GM12878 (cell line): ENCODE measurements at regions of chr16 and their contacts with region 1.

Region 1: GRCh38 chr16:68289621-68290329 is 21.0 kb downstream of the SLC7A6OS start:
- DNase-seq: peak; percentile 77
- ATAC-seq: peak; percentile 95
- H3K4me3 ChIP-seq: peak overlapping the region; percentile 29; the same call in 1 of the 2 replicates
- H3K27ac ChIP-seq: peak overlapping the region; percentile 92
- H3K4me1 ChIP-seq: peaks cover 57% of the 10 kb centered on the region
- H3K27me3 ChIP-seq: no peaks in the 10 kb centered on the region
- CTCF ChIP-seq: no peak
- EP300 ChIP-seq: 0 out of 4 replicates have a peak, but pooled peaks of 1 of the 2 experiments have one; percentile 11
- POLR2A ChIP-seq: 0 out of 2 replicates have a peak, but pooled peaks have one; percentile 37
- RAD21 ChIP-seq: no peak

Region 2: GRCh38 chr16:68275611-68276191 is 14.1 kb before region 1 on chr16:
- CTCF ChIA-PET with region 1: interaction called, 19 read pairs
- POLR2A ChIA-PET with region 1: interaction called, 177 read pairs
- RAD21 ChIA-PET with region 1: interaction called, 32 read pairs
- SMC1A ChIA-PET with region 1: interaction called, 253 read pairs
- in situ Hi-C with region 1: no loop called
- intact Hi-C with region 1: no loop called
- DNase-seq: peak; percentile 96
- ATAC-seq: peak; percentile 87
- H3K4me3 ChIP-seq: peak overlapping the region; percentile 28; the same call in 1 of the 2 replicates
- H3K27ac ChIP-seq: peak overlapping the region; percentile 70
- H3K4me1 ChIP-seq: peaks cover 37% of the 10 kb centered on the region
- H3K27me3 ChIP-seq: no peaks in the 10 kb centered on the region
- CTCF ChIP-seq: no peak
- EP300 ChIP-seq: peak; percentile 44 to 80; a peak in 3 of 4 replicates
- POLR2A ChIP-seq: no peak
- RAD21 ChIP-seq: no peak

Region 3: GRCh38 chr16:68310761-68311511 is 21.2 kb after region 1 on chr16 and contains the starts of genes PRMT7 and SLC7A6OS:
- CTCF ChIA-PET with region 1: interaction called, 18 read pairs
- POLR2A ChIA-PET with region 1: interaction called, 15 read pairs
- RAD21 ChIA-PET with region 1: interaction called, 16 read pairs
- SMC1A ChIA-PET with region 1: interaction called, 20 read pairs
- in situ Hi-C with region 1: no loop called
- intact Hi-C with region 1: no loop called
- DNase-seq: peak; percentile 65
- ATAC-seq: peak; percentile 99
- H3K4me3 ChIP-seq: peak within 1 kb of the TSS; percentile 95
- H3K27ac ChIP-seq: peak within 1 kb of the TSS; percentile 79
- H3K4me1 ChIP-seq: 0 out of 2 replicates have a peak, but pooled peaks cover 3% of the 10 kb centered on the region
- H3K27me3 ChIP-seq: no peaks in the 10 kb centered on the region
- CTCF ChIP-seq: no peak
- EP300 ChIP-seq: peak in 1 of 2 experiments; percentile 27; a peak in 1 of 4 replicates
- POLR2A ChIP-seq: peak; percentile 98
- RAD21 ChIP-seq: 0 out of 2 replicates have a peak, but pooled peaks have one; percentile 8
- polyA plus RNA-seq, gene PRMT7: 5.1 to 5.6 TPM
- polyA plus RNA-seq, gene SLC7A6OS: 2.9 to 6.4 TPM

Region 4: DNA sequence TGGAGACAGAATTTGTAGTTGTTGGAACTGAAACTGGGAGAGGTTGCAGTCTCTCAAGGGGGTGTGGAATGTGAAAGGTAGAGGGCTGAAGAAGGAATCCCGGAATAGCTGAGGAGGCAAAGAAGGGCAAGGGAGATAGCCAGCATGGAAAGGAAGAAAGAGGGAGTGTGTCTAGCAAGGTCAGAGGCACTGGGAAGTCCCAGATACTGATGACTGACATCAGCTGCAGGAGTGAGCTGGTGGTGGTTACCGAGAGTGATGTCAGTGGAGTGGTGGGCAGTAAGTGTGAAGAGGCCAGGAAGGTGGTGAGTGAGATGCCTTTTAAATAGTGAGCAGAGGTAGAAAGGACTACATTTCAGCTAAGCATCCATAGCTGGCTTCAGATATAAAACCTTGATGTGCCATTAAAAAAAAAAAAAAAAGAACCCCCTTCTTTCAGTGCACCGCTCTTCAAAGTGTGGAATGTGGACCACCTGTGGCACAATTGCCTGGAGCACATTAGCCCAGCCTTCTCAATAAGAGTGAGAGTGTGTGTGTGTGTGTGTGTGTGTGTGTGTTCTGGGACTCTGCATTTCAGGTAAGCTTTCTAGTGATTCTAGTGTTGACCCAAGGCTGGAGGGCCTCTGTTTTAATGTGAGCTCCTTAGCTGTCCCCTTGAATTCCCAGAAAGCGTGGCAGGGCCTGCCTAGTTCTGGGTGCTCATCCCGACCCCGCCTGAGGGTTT is 29.6 kb after region 1 on chr16:
- CTCF ChIA-PET with region 1: interaction called, 6 read pairs
- POLR2A ChIA-PET with region 1: interaction called, 18 read pairs
- RAD21 ChIA-PET with region 1: interaction called, 14 read pairs
- SMC1A ChIA-PET with region 1: interaction called, 12 read pairs
- in situ Hi-C with region 1: no loop called
- intact Hi-C with region 1: no loop called
- DNase-seq: no peak
- ATAC-seq: peak; percentile 100
- H3K4me3 ChIP-seq: no peak overlapping the region
- H3K27ac ChIP-seq: peak overlapping the region; percentile 61
- H3K4me1 ChIP-seq: peaks cover 8% of the 10 kb centered on the region
- H3K27me3 ChIP-seq: no peaks in the 10 kb centered on the region
- CTCF ChIP-seq: no peak
- EP300 ChIP-seq: peak in 1 of 2 experiments; percentile 71; a peak in 3 of 4 replicates
- POLR2A ChIP-seq: no peak
- RAD21 ChIP-seq: no peak